ENCODE measurements at regions of chr5 and their contacts with region 1.

Region 1: DNA sequence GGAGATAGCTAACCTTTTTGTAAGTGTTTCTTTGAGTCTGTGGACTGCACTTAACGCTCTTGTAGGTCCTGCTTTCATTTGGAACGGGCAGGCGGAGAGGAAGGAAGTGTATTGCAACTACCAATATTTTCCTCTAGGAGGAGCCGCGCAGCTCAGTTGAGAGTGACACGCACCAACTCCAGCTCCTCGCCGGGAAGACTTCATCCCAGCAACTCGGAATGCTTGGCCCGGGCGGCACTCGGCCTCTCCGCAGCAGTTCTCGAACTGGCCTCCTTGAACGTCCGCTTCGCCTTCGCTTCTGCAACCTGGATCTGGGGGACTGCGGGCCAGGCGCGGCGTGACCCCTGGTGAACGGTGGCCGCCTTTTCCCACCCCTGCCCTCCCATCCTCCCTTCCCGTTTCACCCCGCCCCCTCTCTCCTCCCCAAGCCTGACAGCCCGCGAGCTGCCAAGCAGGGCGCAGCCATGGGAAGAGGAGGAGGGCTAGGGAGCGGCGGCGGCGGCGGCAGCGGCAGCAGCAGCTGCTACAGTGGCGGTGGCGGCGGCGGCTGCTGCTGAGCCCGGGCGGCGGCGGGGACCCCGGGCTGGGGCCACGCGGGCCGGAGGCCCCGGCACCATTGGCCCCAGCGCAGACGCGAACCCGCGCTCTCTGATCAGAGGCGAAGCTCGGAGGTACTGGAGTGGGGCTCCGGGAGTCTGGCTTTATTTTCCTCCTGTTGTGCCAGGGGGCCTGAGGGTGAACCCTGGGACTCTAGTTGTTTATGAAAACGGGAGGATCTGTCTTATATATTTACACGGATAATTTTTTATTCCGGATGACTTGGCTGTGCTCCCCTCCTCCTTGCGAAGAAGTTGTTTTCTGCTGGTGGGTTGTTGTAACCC is at the start of gene GHR:
- DNase-seq: peak; percentile 51
- H3K4me3 ChIP-seq: peak within 1 kb of the TSS; percentile 72
- CTCF ChIP-seq: peak; percentile 79

Region 2: GRCh38 chr5:42021119-42021518 is 402.4 kb before region 1 on chr5:
- CTCF ChIA-PET with region 1: no interaction called
- POLR2A ChIA-PET with region 1: no interaction called
- DNase-seq: no peak
- H3K4me3 ChIP-seq: no peak overlapping the region
- CTCF ChIP-seq: no peak

Region 3: GRCh38 chr5:42404366-42404765 is 19.2 kb before region 1 on chr5:
- CTCF ChIA-PET with region 1: interaction called, 10 read pairs
- POLR2A ChIA-PET with region 1: no interaction called
- DNase-seq: no peak
- H3K4me3 ChIP-seq: no peak overlapping the region
- CTCF ChIP-seq: no peak

Region 4: GRCh38 chr5:42495914-42496313 is 72.4 kb after region 1 on chr5:
- CTCF ChIA-PET with region 1: no interaction called
- POLR2A ChIA-PET with region 1: no interaction called
- DNase-seq: no peak
- H3K4me3 ChIP-seq: no peak overlapping the region
- CTCF ChIP-seq: no peak

Region 5: DNA sequence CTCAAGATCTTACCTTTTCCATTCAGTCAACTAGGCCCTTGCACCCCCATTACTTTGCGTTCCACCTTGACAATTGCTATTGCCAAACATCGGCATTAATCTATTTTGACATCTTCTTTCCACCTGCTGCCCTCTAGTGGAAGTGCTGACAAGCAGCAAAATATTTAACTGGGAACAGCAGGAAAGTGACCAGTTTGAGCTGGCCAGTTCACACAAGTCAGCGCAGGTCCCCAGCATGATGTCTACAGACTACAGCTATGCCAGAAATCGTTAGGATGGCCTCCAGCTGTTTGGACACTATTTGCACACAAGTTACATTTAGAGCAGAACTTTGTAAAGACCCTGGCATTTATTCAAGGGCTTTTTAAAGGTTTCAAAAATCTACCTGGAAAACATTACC is 159.8 kb after region 1 on chr5:
- CTCF ChIA-PET with region 1: interaction called, 59 read pairs
- POLR2A ChIA-PET with region 1: no interaction called
- DNase-seq: no peak
- H3K4me3 ChIP-seq: no peak overlapping the region
- CTCF ChIP-seq: peak; percentile 69

Measured in AG04449 (cell line).